GM12878 (cell line): ENCODE measurements at regions of chr10 and their contacts with region 1.

Region 1: DNA sequence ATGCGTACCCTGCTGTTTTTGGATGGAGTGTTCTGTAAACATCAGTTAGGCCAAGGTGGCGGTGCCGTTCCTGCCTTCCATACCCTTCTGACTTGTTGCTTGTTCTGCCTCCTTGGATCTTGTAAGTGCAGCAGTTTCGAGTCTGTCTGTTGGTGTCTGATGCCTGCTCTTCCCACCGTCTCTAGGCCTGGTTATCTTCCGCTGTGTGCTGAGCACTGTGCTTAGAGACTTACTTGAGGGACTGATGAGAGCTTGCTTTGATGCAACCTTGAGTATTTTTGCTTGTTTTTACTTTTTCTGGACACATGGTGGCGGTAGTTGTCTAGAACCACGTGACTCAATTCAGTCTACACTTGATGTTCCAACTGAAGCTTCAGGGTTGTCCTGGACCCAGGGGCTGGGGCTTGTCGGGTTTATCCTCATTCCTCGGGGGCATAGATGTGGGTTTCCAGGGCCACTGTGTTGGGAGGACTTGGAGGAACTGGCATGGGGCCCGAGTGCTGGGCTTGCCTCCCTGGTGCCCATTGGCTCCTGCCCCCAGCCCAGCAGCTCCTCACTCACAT is 14.4 kb upstream of the SPRN start:
- DNase-seq: peak; percentile 16
- ATAC-seq: peak; percentile 90
- H3K4me3 ChIP-seq: no peak overlapping the region
- H3K27ac ChIP-seq: no peak overlapping the region
- H3K4me1 ChIP-seq: no peaks in the 10 kb centered on the region
- H3K27me3 ChIP-seq: no peaks in the 10 kb centered on the region
- CTCF ChIP-seq: peak; percentile 40 to 58 (median 43); a peak in 5 of 6 replicates
- EP300 ChIP-seq: no peak
- POLR2A ChIP-seq: no peak
- RAD21 ChIP-seq: peak; percentile 41

Region 2: DNA sequence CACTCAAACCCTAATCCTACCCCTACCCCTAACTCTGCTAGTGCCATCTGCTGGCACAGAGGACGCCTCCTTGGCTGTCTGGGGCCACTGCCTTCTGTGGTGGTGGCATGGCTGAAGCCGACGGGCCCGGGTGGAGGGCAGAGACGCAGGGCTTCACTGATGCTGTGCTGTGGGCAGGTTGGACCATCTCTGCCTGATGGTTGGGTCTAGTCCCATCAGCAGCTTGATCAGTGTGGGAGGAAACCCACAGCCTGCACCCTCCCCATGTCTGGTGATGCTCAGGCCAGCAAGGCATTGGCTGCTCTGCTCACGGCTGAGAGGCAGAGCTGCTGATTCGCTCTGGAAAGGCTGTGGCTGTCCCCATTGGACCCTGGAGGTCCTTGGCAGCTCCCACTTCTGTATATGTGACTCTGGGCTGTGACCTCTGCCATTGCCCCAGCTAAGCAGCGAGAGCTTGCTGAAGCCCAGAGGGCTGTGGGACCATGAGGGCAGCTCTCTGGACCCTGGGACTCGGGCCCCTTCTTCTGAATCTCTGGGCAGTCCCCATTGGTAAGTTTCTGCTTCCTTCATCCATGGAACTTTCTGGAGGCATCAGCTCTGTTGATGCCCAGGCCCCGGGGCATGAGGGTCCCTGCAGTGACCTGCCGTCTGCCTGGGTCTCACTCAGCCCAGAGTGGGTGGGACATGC is 14.9 kb after region 1 on chr10 and contains the start of gene SCART1:
- CTCF ChIA-PET with region 1: interaction called, 10 read pairs
- POLR2A ChIA-PET with region 1: no interaction called
- RAD21 ChIA-PET with region 1: no interaction called
- SMC1A ChIA-PET with region 1: no interaction called
- in situ Hi-C with region 1: no loop called
- intact Hi-C with region 1: no loop called
- DNase-seq: no peak
- ATAC-seq: peak; percentile 29
- H3K4me3 ChIP-seq: no peak within 1 kb of the TSS
- H3K27ac ChIP-seq: no peak within 1 kb of the TSS
- H3K4me1 ChIP-seq: no peaks in the 10 kb centered on the region
- H3K27me3 ChIP-seq: no peaks in the 10 kb centered on the region
- CTCF ChIP-seq: 0 out of 6 replicates have a peak, but pooled peaks of 1 of the 3 experiments have one; percentile 5
- EP300 ChIP-seq: no peak
- POLR2A ChIP-seq: no peak
- RAD21 ChIP-seq: no peak
- polyA plus RNA-seq, gene SCART1: 0.05 to 0.09 TPM

Region 3: DNA sequence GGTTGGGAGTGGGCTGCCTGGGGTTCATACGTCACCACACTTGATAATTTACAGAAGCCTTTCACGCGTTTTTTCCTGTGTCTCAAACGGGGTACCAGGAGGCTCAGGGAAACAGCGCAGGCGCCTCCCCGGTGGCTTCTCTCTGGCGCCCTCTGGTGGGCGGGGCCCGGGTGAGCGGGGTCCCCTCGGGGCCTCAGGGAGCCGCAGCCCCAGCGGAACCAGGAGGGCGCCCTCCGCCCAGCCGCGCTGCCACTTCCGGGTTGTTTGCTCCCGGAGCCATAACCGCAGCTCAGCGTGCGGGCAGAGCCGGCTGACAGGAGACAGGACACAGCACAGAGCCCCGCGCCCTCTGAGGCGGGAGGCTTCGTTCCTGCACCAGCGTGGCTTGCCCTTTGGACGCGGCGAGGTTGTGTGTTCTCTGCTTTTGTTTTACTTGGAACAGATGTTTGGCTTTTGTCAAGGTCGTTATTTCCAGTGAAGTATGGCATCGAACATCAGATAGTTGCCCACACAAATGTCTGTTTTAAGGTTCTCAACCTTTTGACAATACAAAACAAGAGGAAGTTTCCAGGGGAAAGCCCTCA is 81.5 kb after region 1 on chr10:
- CTCF ChIA-PET with region 1: interaction called, 8 read pairs
- POLR2A ChIA-PET with region 1: no interaction called
- RAD21 ChIA-PET with region 1: interaction called, 3 read pairs
- SMC1A ChIA-PET with region 1: interaction called, 3 read pairs
- in situ Hi-C with region 1: no loop called
- intact Hi-C with region 1: loop called (anchors 2 kb)
- DNase-seq: peak; percentile 16
- ATAC-seq: peak; percentile 100
- H3K4me3 ChIP-seq: peak overlapping the region; percentile 20; the same call in 1 of the 2 replicates
- H3K27ac ChIP-seq: no peak overlapping the region
- H3K4me1 ChIP-seq: no peaks in the 10 kb centered on the region
- H3K27me3 ChIP-seq: no peaks in the 10 kb centered on the region
- CTCF ChIP-seq: peak; percentile 70 to 85 (median 77)
- EP300 ChIP-seq: no peak
- POLR2A ChIP-seq: peak; percentile 71
- RAD21 ChIP-seq: peak; percentile 47

Region 4: GRCh38 chr10:133608855-133609254 is 170.1 kb after region 1 on chr10:
- CTCF ChIA-PET with region 1: interaction called, 7 read pairs
- POLR2A ChIA-PET with region 1: no interaction called
- RAD21 ChIA-PET with region 1: no interaction called
- SMC1A ChIA-PET with region 1: interaction called, 3 read pairs
- in situ Hi-C with region 1: no loop called
- intact Hi-C with region 1: loop called (anchors 5 kb)
- DNase-seq: no peak
- ATAC-seq: peak; percentile 54
- H3K4me3 ChIP-seq: no peak overlapping the region
- H3K27ac ChIP-seq: no peak overlapping the region
- H3K4me1 ChIP-seq: no peaks in the 10 kb centered on the region
- H3K27me3 ChIP-seq: no peaks in the 10 kb centered on the region; a peak in 1 of 4 replicates
- CTCF ChIP-seq: peak; percentile 37 to 56 (median 49); a peak in 5 of 6 replicates
- EP300 ChIP-seq: no peak
- POLR2A ChIP-seq: no peak
- RAD21 ChIP-seq: peak; percentile 48